H1 (cell line): ENCODE measurements at regions of chr3 and their contacts with region 1.

Region 1: GRCh38 chr3:128395500-128396162 is 71.1 kb downstream of the DNAJB8 start:
- DNase-seq: no peak
- H3K4me3 ChIP-seq: no peak overlapping the region
- H3K27ac ChIP-seq: no peak overlapping the region
- H3K4me1 ChIP-seq: peaks cover 0 to 5% (median 1%) of the 10 kb centered on the region in 4 experiments; a peak in 4 of 7 replicates
- H3K27me3 ChIP-seq: no peaks in the 10 kb centered on the region
- CTCF ChIP-seq: no peak
- EP300 ChIP-seq: no peak
- POLR2A ChIP-seq: no peak
- RAD21 ChIP-seq: no peak

Region 2: GRCh38 chr3:128242818-128243601 is 152.6 kb before region 1 on chr3:
- CTCF ChIA-PET with region 1: no interaction called
- POLR2A ChIA-PET with region 1: no interaction called
- DNase-seq: peak in 1 of 2 experiments; percentile 29
- H3K4me3 ChIP-seq: no peak overlapping the region
- H3K27ac ChIP-seq: no peak overlapping the region
- H3K4me1 ChIP-seq: peaks cover 0 to 5% (median 0%) of the 10 kb centered on the region in 4 experiments; a peak in 1 of 7 replicates
- H3K27me3 ChIP-seq: no peaks in the 10 kb centered on the region
- CTCF ChIP-seq: no peak
- EP300 ChIP-seq: no peak
- POLR2A ChIP-seq: no peak
- RAD21 ChIP-seq: no peak

Region 3: GRCh38 chr3:128383316-128384235 is 12.1 kb before region 1 on chr3:
- CTCF ChIA-PET with region 1: interaction called, 11 read pairs
- POLR2A ChIA-PET with region 1: interaction called, 4 read pairs
- DNase-seq: no peak
- H3K4me3 ChIP-seq: no peak overlapping the region
- H3K27ac ChIP-seq: no peak overlapping the region
- H3K4me1 ChIP-seq: no peaks in the 10 kb centered on the region
- H3K27me3 ChIP-seq: no peaks in the 10 kb centered on the region
- CTCF ChIP-seq: no peak
- EP300 ChIP-seq: no peak
- POLR2A ChIP-seq: no peak
- RAD21 ChIP-seq: no peak

Region 4: DNA sequence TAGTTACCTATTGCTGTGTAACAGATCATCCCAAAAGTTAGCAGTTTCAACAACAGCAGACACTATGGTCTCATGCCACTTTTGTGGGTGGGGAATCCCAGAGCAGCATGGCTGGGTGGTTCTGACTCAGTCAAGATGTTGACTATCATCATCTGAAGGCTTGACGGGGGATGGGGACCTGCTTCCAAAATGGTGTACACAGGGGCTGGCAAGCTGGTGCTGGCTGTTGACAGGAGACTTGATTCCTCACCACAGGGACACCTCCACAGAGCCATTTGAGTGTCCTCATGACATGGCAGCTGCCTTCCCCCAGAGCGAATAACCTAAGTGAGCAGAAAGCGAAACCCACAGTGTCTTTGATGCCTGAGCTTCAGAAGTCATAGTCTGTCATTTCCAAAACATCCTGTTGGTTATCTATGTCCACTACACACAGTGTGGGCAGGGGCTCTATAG is 52.0 kb after region 1 on chr3:
- CTCF ChIA-PET with region 1: no interaction called
- POLR2A ChIA-PET with region 1: no interaction called
- DNase-seq: no peak
- H3K4me3 ChIP-seq: no peak overlapping the region
- H3K27ac ChIP-seq: no peak overlapping the region
- H3K4me1 ChIP-seq: no peaks in the 10 kb centered on the region
- H3K27me3 ChIP-seq: peaks cover 0 to 2% (median 0%) of the 10 kb centered on the region in 4 experiments; a peak in 3 of 7 replicates
- CTCF ChIP-seq: no peak
- EP300 ChIP-seq: no peak
- POLR2A ChIP-seq: no peak
- RAD21 ChIP-seq: no peak